ENCODE measurements at regions of chr16 and their contacts with region 1.

Region 1: DNA sequence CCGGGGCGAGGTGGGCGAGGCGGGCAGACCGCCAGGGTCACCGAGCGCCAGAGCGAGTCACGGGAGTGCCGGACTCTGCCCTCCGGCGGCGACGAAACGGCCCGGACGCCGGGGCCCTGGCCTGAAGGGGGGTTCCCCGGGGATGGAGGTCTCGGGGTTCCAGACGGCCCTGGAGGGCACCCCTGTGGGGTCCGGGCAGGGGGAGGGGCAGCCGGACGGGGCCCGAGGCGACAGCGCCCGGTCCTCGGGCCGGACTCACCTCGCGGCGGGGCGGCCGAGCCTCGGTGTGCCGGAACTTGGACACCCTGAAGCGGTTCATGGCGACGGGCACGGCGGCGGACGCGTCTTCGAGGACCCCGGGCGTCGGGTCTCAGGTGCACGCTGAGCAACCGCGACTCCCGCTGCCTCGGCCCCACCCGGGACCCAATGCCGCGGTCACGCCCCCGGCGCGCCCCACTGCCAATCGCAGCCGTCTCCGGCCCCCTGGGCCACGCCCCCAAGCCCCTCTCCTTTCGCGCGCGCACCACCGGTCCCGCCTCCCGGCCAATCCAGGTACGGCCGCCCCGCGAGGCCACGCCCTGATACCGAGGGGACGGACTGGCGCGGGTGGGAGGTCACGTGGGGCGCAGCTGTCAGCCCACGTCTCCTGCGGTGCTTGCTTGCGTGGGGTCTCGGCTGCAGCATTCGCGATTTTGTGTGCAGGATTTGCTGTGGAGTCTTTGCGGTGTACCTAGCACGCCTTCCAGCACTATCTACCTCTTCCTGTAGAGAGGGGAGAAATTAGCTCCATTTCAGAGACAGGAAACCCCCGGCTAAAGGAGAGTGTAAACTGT is at the start of gene CORO7:
- DNase-seq: peak; percentile 73 to 97
- H3K4me3 ChIP-seq: peak within 1 kb of the TSS; percentile 84
- H3K27ac ChIP-seq: no peak within 1 kb of the TSS
- H3K4me1 ChIP-seq: peaks cover 7% of the 10 kb centered on the region
- H3K27me3 ChIP-seq: no peaks in the 10 kb centered on the region
- CTCF ChIP-seq: no peak
- total RNA-seq, gene CORO7: 42.1 and 55.4 TPM in 2 replicates

Region 2: GRCh38 chr16:4350787-4351659 is 65.4 kb before region 1 on chr16 and contains the start of gene PAM16:
- CTCF ChIA-PET with region 1: interaction called, 18 read pairs
- POLR2A ChIA-PET with region 1: no interaction called
- intact Hi-C with region 1: no loop called
- DNase-seq: peak; percentile 84 to 99
- H3K4me3 ChIP-seq: peak within 1 kb of the TSS; percentile 89
- H3K27ac ChIP-seq: peak within 1 kb of the TSS; percentile 69
- H3K4me1 ChIP-seq: peaks cover 32% of the 10 kb centered on the region
- H3K27me3 ChIP-seq: no peaks in the 10 kb centered on the region
- CTCF ChIP-seq: no peak
- total RNA-seq, gene PAM16: 95.9 and 110 TPM in 2 replicates

Region 3: GRCh38 chr16:4477966-4478365 is 61.5 kb after region 1 on chr16:
- CTCF ChIA-PET with region 1: no interaction called
- POLR2A ChIA-PET with region 1: no interaction called
- intact Hi-C with region 1: no loop called
- DNase-seq: peak; percentile 39 to 49
- H3K4me3 ChIP-seq: peak overlapping the region; percentile 90; the same call in 1 of the 2 replicates
- H3K27ac ChIP-seq: peak overlapping the region; percentile 50
- H3K4me1 ChIP-seq: peaks cover 27% of the 10 kb centered on the region
- H3K27me3 ChIP-seq: no peaks in the 10 kb centered on the region
- CTCF ChIP-seq: no peak; the same call in 1 of the 2 replicates